MCF 10A (cell line): ENCODE measurements at regions of chr1 and their contacts with region 1.

Region 1: GRCh38 chr1:66446261-66447001 is 87.5 kb upstream of the SGIP1 start:
- DNase-seq: peak; percentile 68
- H3K4me3 Mint-ChIP-seq: no peak overlapping the region
- H3K27ac Mint-ChIP-seq: no peak overlapping the region
- H3K4me1 Mint-ChIP-seq: no peaks in the 10 kb centered on the region
- H3K27me3 Mint-ChIP-seq: no peaks in the 10 kb centered on the region
- CTCF ChIP-seq: peak; percentile 75

Region 2: DNA sequence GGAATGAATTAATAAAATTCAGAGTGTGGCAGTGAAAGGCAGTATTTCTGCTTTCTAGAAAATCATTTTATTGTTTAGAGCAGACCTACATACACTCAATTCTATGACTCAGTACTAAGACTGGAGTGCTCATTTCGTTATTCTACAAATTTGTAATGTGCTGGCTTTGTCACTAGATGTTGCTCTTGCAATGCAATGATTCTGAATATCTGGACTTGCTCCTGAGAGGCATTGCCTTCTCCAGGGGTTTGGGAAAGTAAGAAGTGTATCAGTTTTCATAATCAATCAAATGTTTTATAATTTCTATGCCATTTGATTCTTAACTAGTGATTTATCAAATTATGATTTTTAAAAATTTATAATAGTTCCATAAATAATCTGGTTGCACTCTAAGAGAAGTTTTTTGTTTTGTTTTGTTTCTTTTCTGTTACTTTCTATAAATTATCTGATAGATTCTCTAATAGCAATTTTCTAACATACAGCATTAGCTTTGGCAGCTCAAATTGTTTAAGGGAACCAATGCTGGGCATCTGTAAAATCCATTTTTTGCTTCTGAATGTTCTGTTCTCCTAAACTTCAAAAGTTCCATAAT is 193.0 kb before region 1 on chr1:
- CTCF ChIA-PET with region 1: interaction called, 687 read pairs
- POLR2A ChIA-PET with region 1: interaction called, 23 read pairs
- intact Hi-C with region 1: loop called (anchors 1 kb)
- DNase-seq: peak; percentile 77
- H3K4me3 Mint-ChIP-seq: no peak overlapping the region
- H3K27ac Mint-ChIP-seq: no peak overlapping the region
- H3K4me1 Mint-ChIP-seq: peaks cover 32% of the 10 kb centered on the region
- H3K27me3 Mint-ChIP-seq: no peaks in the 10 kb centered on the region
- CTCF ChIP-seq: peak; percentile 77

Region 3: DNA sequence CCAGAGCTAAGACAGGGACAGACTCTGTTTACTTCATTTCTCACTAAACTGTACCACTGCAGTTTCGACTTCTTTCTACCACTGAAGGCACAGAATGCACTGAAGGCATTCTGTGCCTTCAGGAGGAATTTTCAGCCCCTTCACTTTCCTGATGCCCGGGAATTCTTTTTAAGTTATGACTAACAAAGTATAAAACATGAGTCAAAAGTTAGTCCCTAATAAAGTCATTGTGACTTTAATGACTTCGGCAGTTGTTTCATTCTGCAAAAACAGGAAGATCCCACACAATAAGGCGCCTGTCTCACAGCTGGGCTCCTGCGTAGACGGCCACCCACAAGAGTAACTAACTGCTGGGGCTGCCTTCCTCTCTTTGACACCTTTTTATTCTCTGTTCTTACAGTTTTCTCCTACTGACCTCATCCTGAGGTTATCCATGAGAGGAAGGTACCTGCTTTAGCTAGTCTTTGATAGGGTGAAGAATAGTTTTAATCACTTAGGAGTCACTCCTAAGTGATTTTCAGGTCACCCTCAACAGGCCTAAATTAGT is 96.4 kb before region 1 on chr1:
- CTCF ChIA-PET with region 1: interaction called, 13 read pairs
- POLR2A ChIA-PET with region 1: no interaction called
- intact Hi-C with region 1: no loop called
- DNase-seq: no peak
- H3K4me3 Mint-ChIP-seq: no peak overlapping the region
- H3K27ac Mint-ChIP-seq: peak overlapping the region; percentile 36
- H3K4me1 Mint-ChIP-seq: peaks cover 56% of the 10 kb centered on the region
- H3K27me3 Mint-ChIP-seq: no peaks in the 10 kb centered on the region
- CTCF ChIP-seq: no peak

Region 4: GRCh38 chr1:66503841-66504470 is 57.5 kb after region 1 on chr1:
- CTCF ChIA-PET with region 1: interaction called, 31 read pairs
- POLR2A ChIA-PET with region 1: no interaction called
- intact Hi-C with region 1: loop called (anchors 1 kb)
- DNase-seq: peak; percentile 69
- H3K4me3 Mint-ChIP-seq: no peak overlapping the region
- H3K27ac Mint-ChIP-seq: no peak overlapping the region
- H3K4me1 Mint-ChIP-seq: no peaks in the 10 kb centered on the region
- H3K27me3 Mint-ChIP-seq: no peaks in the 10 kb centered on the region
- CTCF ChIP-seq: peak; percentile 44

Region 5: GRCh38 chr1:66623812-66624211 is 177.4 kb after region 1 on chr1:
- CTCF ChIA-PET with region 1: no interaction called
- POLR2A ChIA-PET with region 1: no interaction called
- intact Hi-C with region 1: no loop called
- DNase-seq: no peak
- H3K4me3 Mint-ChIP-seq: no peak overlapping the region
- H3K27ac Mint-ChIP-seq: peak overlapping the region; percentile 20
- H3K4me1 Mint-ChIP-seq: peaks cover 13% of the 10 kb centered on the region
- H3K27me3 Mint-ChIP-seq: no peaks in the 10 kb centered on the region
- CTCF ChIP-seq: no peak